Esophagus squamous epithelium (tissue), 5 donors: ENCODE measurements at regions of chr2 and their contacts with region 1.

Region 1: GRCh38 chr2:165401285-165401852 is 68.1 kb upstream of the CSRNP3 start:
- DNase-seq: no peak
- H3K4me3 ChIP-seq: no peak overlapping the region
- H3K27ac ChIP-seq: no peak overlapping the region
- H3K4me1 ChIP-seq: no peaks in the 10 kb centered on the region
- H3K27me3 ChIP-seq: peaks cover 0 to 5% (median 0%) of the 10 kb centered on the region in 4 donors
- CTCF ChIP-seq: peak; percentile 52 to 75 (median 60)
- POLR2A ChIP-seq: no peak

Region 2: GRCh38 chr2:164287056-164287455 is 1114.3 kb before region 1 on chr2:
- intact Hi-C with region 1: no loop called
- DNase-seq: no peak
- H3K4me3 ChIP-seq: no peak overlapping the region
- H3K27ac ChIP-seq: no peak overlapping the region
- H3K4me1 ChIP-seq: no peaks in the 10 kb centered on the region
- H3K27me3 ChIP-seq: no peaks in the 10 kb centered on the region
- CTCF ChIP-seq: no peak
- POLR2A ChIP-seq: no peak

Region 3: DNA sequence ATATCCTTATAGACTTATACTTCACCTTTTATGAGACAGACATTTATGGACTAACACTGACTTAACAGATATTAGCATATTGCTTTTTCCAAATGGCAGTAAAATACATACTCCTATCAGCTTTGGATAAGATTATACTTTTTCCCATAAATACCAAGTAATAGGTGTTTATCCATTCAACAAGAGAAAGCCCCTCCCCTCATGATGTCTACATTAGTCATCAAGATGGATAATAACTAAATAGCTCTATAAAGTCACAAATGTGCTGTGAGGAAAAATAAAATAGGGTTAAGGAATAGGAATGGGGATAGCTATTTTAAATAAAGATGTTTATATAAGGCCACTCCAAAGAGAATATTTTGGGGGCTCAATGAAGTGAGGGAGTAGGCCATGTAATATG is 107.6 kb after region 1 on chr2:
- intact Hi-C with region 1: no loop called
- DNase-seq: no peak
- H3K4me3 ChIP-seq: no peak overlapping the region
- H3K27ac ChIP-seq: no peak overlapping the region
- H3K4me1 ChIP-seq: no peaks in the 10 kb centered on the region
- H3K27me3 ChIP-seq: no peaks in the 10 kb centered on the region
- CTCF ChIP-seq: no peak
- POLR2A ChIP-seq: no peak

Region 4: GRCh38 chr2:165698444-165698894 is 297.1 kb after region 1 on chr2:
- intact Hi-C with region 1: loop called (anchors 10 kb)
- DNase-seq: no peak
- H3K4me3 ChIP-seq: no peak overlapping the region
- H3K27ac ChIP-seq: no peak overlapping the region
- H3K4me1 ChIP-seq: no peaks in the 10 kb centered on the region
- H3K27me3 ChIP-seq: no peaks in the 10 kb centered on the region
- CTCF ChIP-seq: peak in 4 of 6 experiments; percentile 12 to 49 (median 32)
- POLR2A ChIP-seq: no peak

Region 5: GRCh38 chr2:165874445-165875039 is 473.2 kb after region 1 on chr2:
- intact Hi-C with region 1: loop called (anchors 10 kb)
- DNase-seq: no peak
- H3K4me3 ChIP-seq: no peak overlapping the region
- H3K27ac ChIP-seq: no peak overlapping the region
- H3K4me1 ChIP-seq: peaks cover 0 to 6% (median 0%) of the 10 kb centered on the region in 3 donors
- H3K27me3 ChIP-seq: no peaks in the 10 kb centered on the region
- CTCF ChIP-seq: peak; percentile 44 to 84 (median 68)
- POLR2A ChIP-seq: no peak